ENCODE measurements at regions of chr6 and their contacts with region 1.

Region 1: GRCh38 chr6:17820055-17820454 is 113.3 kb upstream of the NUP153 start:
- DNase-seq: peak; percentile 14
- ATAC-seq: peak; percentile 57
- H3K4me3 ChIP-seq: no peak overlapping the region
- H3K27ac ChIP-seq: no peak overlapping the region
- H3K4me1 ChIP-seq: peaks cover 10% of the 10 kb centered on the region; the same call in 1 of the 2 replicates
- H3K27me3 ChIP-seq: no peaks in the 10 kb centered on the region
- CTCF ChIP-seq: no peak

Region 2: DNA sequence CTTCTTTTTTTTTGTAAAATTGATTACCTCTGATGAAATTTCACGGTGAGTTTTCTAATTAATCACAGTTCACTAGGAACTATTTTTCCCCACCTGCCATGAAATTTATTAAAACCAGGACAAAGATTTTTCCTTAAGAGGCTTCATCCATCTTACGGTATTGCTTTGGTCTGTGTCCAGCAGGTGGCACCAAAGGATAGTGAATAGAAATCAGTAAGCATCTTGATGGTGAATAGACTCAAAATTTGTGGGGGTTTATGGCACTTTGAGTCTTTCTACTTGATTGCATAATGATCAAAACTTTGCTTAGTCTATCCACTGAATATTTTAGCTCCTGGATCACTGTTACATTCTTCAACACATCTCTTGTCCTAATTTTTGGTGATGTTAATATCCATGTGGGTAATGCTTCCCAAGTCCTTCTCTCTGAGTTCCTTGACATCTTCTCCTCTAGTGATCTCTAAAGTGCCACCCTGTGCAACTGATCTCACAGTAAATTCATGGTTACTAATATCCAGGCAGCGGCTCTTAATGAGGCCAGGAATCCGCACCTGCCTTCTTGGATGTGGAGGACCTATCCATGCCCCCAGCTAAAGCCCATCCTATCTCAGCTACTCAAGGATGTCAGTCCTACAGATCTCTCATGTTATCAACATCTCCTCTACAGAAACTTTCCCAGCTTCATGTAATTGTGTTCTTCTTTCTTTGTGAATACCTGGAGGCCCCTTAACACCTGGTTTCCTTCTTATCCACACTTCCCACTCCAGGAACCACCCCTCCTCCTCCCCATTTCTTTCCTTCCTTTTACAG is 663.7 kb before region 1 on chr6:
- CTCF ChIA-PET with region 1: no interaction called
- POLR2A ChIA-PET with region 1: no interaction called
- intact Hi-C with region 1: loop called (anchors 2 kb)
- DNase-seq: peak; percentile 88
- ATAC-seq: peak; percentile 76
- H3K4me3 ChIP-seq: no peak overlapping the region
- H3K27ac ChIP-seq: no peak overlapping the region
- H3K4me1 ChIP-seq: no peaks in the 10 kb centered on the region
- H3K27me3 ChIP-seq: no peaks in the 10 kb centered on the region
- CTCF ChIP-seq: peak; percentile 94

Region 3: GRCh38 chr6:17907406-17908229 is 87.6 kb after region 1 on chr6:
- CTCF ChIA-PET with region 1: no interaction called
- POLR2A ChIA-PET with region 1: no interaction called
- intact Hi-C with region 1: loop called (anchors 5 kb)
- DNase-seq: peak; percentile 97
- ATAC-seq: peak; percentile 94
- H3K4me3 ChIP-seq: no peak overlapping the region
- H3K27ac ChIP-seq: peak overlapping the region; percentile 88
- H3K4me1 ChIP-seq: peaks cover 43% of the 10 kb centered on the region
- H3K27me3 ChIP-seq: no peaks in the 10 kb centered on the region
- CTCF ChIP-seq: peak; percentile 56

Region 4: DNA sequence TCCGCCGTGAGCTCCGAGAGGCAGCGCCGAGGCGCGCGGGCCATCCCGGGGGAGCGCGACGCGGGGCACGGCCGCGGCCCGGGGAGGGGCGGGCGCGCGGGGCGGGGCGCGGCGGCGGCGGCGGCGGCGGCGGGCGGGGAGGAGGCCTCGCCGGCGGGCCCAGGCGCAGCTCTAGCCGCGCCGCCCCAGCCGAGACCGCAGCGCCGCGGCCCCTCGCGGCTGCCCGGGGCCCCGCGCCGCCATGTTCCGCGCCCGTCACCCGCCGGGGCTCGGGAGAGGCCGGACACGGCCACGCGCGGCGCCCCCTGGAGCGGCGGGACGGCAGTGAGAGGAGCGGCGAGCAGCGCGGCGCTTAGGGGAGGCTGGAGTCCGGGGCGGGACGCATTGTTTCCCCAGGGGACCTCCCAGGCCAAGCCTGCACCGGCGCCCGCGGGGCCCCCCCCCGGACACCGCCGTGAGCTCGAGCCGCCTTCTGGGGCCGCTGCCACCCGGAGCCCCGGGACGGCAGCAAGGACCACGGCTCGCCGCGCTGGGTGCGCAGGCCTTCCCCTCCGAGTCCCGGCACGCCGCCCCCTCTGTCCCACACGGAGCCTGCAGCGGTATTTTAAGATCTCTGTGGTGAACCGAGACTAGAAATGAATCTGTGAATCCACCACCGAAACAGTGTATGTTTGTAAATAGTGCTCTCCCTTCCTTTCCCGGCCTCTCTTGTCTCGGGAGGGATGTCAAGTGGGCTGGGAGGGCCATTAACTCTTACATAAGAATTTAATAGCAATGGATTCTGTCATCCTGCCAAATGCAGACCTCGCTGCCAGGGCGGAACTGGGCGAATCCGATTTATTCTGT is 167.7 kb after region 1 on chr6 and contains the start of gene KIF13A:
- CTCF ChIA-PET with region 1: no interaction called
- POLR2A ChIA-PET with region 1: no interaction called
- intact Hi-C with region 1: loop called (anchors 5 kb)
- DNase-seq: peak; percentile 71
- ATAC-seq: peak; percentile 66
- H3K4me3 ChIP-seq: peak within 1 kb of the TSS; percentile 86
- H3K27ac ChIP-seq: peak within 1 kb of the TSS; percentile 54
- H3K4me1 ChIP-seq: peaks cover 43% of the 10 kb centered on the region
- H3K27me3 ChIP-seq: no peaks in the 10 kb centered on the region
- CTCF ChIP-seq: peak; percentile 21
- total RNA-seq, gene KIF13A: 21.3 and 27.1 TPM in 2 replicates

Region 5: GRCh38 chr6:18122124-18123093 is 302.4 kb after region 1 on chr6 and contains the start of gene NHLRC1:
- CTCF ChIA-PET with region 1: interaction called, 8 read pairs
- POLR2A ChIA-PET with region 1: no interaction called
- intact Hi-C with region 1: loop called (anchors 2 kb)
- DNase-seq: peak; percentile 93
- ATAC-seq: peak; percentile 98
- H3K4me3 ChIP-seq: peak within 1 kb of the TSS; percentile 69
- H3K27ac ChIP-seq: peak within 1 kb of the TSS; percentile 52
- H3K4me1 ChIP-seq: peaks cover 14% of the 10 kb centered on the region
- H3K27me3 ChIP-seq: no peaks in the 10 kb centered on the region
- CTCF ChIP-seq: peak; percentile 92
- total RNA-seq, gene NHLRC1: 0.81 and 1.3 TPM in 2 replicates

Region 6: DNA sequence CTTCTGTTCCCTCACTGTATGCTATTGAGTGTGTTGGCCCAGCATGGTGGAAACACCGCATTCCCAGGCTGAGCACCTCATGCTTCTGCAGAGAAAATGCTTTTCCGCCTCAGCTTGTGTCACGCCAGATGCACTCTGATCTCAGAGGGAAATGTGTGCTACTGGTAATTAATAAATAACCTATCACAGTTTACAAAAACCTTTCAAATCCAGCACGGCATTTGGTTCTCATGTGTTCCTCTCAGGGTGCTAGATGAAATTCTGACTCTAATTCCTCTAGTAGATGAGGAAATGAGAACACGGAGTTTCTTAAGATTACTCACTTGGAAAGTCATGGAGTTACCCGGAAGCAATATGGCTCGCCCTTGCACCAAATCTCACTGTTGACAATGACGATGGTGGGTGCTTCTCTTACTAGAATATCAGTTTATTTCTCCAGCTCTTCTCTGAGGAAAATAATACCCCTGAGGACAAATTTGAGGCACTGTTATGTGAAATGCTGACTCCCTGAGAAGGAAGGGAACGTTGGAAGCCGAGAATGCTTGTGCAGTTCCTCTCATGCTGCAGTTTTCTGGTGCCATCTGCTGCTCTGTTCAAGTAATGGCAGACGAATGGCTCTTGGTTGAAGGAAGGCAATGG is 683.7 kb after region 1 on chr6:
- CTCF ChIA-PET with region 1: no interaction called
- POLR2A ChIA-PET with region 1: no interaction called
- intact Hi-C with region 1: loop called (anchors 10 kb)
- DNase-seq: peak; percentile 81
- ATAC-seq: peak; percentile 92
- H3K4me3 ChIP-seq: peak overlapping the region; percentile 58
- H3K27ac ChIP-seq: peak overlapping the region; percentile 9; the same call in 1 of the 2 replicates
- H3K4me1 ChIP-seq: peaks cover 6% of the 10 kb centered on the region; the same call in 1 of the 2 replicates
- H3K27me3 ChIP-seq: no peaks in the 10 kb centered on the region
- CTCF ChIP-seq: peak; percentile 98

Measured in PC-3 (cell line).